Gastrocnemius medialis (tissue), 4 donors: ENCODE measurements at regions of chr10 and their contacts with region 1.

Region 1: DNA sequence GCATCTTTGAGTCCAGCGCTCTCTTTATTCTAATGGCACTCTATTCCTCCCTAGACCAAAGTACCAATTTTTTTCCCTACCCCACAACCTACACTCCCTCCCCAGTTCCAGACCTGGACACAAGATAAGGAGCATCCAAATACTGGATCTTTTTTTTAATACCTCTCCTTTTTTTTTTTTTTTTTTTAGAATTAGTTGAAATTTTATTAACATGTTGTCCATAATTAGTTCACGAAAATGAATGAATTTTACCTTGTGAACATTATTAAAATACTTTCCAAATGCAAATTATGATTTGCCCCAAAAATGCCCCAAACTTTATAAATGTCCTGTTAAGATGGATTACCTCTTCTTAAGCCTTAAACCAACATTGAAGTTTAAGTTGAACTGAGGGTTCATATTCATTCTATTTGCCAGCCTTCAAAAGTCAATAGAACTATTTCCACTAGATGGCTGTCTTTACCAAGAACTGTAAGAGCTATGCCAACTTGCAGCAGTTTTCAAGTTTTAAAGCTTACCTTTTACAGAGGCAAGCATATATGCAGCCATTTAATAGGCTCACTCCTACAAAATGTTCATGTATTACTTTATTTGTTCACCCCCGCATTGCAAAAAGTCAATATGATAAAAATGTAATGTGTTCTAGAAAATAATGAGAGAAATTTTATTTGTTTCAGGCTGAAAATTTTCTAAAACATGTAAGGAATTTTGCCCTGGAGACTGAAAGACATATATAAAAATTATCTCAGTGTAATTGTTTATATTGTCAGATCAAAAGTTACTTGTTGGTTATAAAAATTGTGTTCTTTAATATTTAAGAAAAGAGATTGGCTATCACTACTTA is 39.7 kb upstream of the TNKS2 start:
- DNase-seq: no peak
- ATAC-seq: peak; percentile 79 to 90
- H3K4me3 ChIP-seq: no peak overlapping the region
- H3K27ac ChIP-seq: no peak overlapping the region
- H3K4me1 ChIP-seq: no peaks in the 10 kb centered on the region
- H3K27me3 ChIP-seq: no peaks in the 10 kb centered on the region
- CTCF ChIP-seq: peak in 4 of 5 experiments; percentile 32 to 60 (median 57)
- POLR2A ChIP-seq: no peak

Region 2: GRCh38 chr10:91493313-91493712 is 265.2 kb before region 1 on chr10:
- in situ Hi-C with region 1: no loop called
- intact Hi-C with region 1: no loop called
- DNase-seq: no peak
- ATAC-seq: peak in 1 of 2 donors; percentile 81
- H3K4me3 ChIP-seq: no peak overlapping the region
- H3K27ac ChIP-seq: no peak overlapping the region
- H3K4me1 ChIP-seq: peaks cover 0 to 4% of the 10 kb centered on the region in 2 donors
- H3K27me3 ChIP-seq: no peaks in the 10 kb centered on the region
- CTCF ChIP-seq: peak; percentile 52 to 72 (median 56)
- POLR2A ChIP-seq: no peak

Region 3: GRCh38 chr10:91771907-91772306 is 13.4 kb after region 1 on chr10:
- in situ Hi-C with region 1: no loop called
- intact Hi-C with region 1: no loop called
- DNase-seq: no peak
- ATAC-seq: no peak
- H3K4me3 ChIP-seq: no peak overlapping the region
- H3K27ac ChIP-seq: no peak overlapping the region
- H3K4me1 ChIP-seq: no peaks in the 10 kb centered on the region
- H3K27me3 ChIP-seq: no peaks in the 10 kb centered on the region
- CTCF ChIP-seq: no peak
- POLR2A ChIP-seq: no peak

Region 4: DNA sequence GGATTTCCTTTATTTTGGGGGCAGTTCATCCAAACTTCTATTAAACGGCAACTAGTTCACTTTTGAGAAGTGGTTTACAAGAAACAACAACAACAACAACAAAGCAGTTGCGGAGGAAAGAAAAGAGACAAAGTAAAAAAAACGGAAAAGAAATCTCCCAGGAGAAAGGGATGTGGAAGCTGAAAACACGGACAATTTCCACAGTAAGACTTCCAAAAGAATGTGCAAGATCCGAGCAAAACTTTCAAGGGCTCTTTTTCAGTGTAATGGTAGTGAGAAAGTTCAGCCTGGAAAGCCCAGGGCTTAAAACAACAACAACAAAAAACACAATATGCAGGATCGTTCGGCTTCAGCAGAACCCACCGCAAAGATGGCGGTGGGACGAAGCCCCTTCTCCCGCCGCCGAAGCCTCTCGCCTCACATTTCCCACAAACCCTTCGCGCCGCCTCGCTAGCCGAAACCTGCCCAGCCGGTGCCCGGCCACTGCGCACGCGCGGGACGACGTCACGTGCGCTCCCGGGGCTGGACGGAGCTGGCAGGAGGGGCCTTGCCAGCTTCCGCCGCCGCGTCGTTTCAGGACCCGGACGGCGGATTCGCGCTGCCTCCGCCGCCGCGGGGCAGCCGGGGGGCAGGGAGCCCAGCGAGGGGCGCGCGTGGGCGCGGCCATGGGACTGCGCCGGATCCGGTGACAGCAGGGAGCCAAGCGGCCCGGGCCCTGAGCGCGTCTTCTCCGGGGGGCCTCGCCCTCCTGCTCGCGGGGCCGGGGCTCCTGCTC is 39.5 kb after region 1 on chr10 and contains the start of gene TNKS2:
- in situ Hi-C with region 1: no loop called
- intact Hi-C with region 1: loop called (anchors 2 kb)
- DNase-seq: peak; percentile 85 to 93
- ATAC-seq: peak; percentile 67 to 77
- H3K4me3 ChIP-seq: peak within 1 kb of the TSS; percentile 72 to 93 (median 84)
- H3K27ac ChIP-seq: peak within 1 kb of the TSS; percentile 95 to 97 (median 96)
- H3K4me1 ChIP-seq: peaks cover 41 to 50% of the 10 kb centered on the region in 2 donors
- H3K27me3 ChIP-seq: no peaks in the 10 kb centered on the region
- CTCF ChIP-seq: peak in 1 of 5 experiments; percentile 13
- POLR2A ChIP-seq: peak; percentile 95 to 96
- total RNA-seq, gene TNKS2: 26.2 to 40.3 (median 29.5) TPM

Region 5: DNA sequence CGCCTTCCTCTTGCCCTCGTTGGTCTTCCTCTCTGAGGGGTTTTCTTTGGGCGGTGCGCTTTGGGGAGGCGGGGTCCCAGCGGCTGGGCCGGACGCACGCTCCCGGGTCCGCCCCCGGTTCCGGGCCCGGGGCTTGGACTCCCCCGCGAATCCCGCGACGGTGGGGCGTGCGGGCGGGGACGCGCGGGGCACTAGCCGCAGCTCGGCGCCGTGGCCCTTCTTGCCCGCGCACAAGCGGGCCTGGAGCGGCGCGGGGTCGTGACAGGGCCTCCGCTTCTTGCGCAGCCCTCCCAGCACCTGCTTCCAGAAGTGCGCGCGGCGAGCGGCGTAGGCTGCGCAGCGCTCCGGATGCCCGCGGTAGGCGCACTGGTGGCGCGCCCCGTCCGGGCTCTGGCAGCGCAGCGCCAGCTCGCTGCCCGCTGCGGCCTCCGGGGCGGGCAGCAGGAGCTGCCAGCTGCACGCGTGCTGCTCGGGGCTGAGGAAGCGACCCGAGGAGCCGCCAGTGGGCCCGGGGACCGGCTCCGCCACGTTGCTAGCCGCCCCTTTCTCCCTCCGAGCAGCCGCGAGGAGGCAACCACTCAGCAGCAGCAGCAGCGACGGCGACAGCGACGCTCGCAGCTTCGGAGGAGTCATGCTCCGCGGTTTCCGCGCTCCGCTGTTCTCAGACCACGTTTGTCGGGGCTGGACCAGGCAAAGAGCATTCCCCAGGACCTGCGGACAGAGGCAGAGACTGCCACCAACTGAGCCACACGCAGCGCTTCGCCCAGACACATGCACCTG is 150.0 kb after region 1 on chr10:
- in situ Hi-C with region 1: no loop called
- intact Hi-C with region 1: loop called (anchors 2 kb)
- DNase-seq: peak; percentile 33 to 67
- ATAC-seq: peak; percentile 94
- H3K4me3 ChIP-seq: peak overlapping the region; percentile 67 to 84 (median 72)
- H3K27ac ChIP-seq: peak overlapping the region; percentile 44 to 60 (median 56)
- H3K4me1 ChIP-seq: peaks cover 7 to 16% of the 10 kb centered on the region in 2 donors
- H3K27me3 ChIP-seq: no peaks in the 10 kb centered on the region
- CTCF ChIP-seq: peak in 2 of 5 experiments; percentile 26 to 44
- POLR2A ChIP-seq: no peak

Region 6: DNA sequence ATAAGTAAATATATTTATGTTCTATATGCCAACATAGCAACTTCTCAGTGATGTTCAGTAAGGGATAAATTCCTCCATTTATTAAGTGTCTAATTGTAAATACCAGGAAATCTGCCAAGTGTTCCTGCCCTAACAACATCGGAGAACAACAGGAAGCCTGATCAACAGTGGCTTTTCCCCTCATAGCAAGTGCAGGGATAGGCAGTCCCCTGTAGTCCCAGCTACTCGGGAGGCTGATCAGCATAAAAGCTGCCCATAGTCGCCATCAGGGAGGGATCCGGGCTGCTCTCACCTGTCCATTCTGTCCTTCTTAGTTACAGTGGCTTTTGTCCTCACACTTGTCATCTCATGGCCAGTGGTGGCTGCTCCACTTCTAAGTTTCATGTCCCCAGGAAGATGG is 674.1 kb after region 1 on chr10:
- in situ Hi-C with region 1: no loop called
- intact Hi-C with region 1: loop called (anchors 5 kb)
- DNase-seq: no peak
- ATAC-seq: peak in 1 of 2 donors; percentile 30
- H3K4me3 ChIP-seq: no peak overlapping the region
- H3K27ac ChIP-seq: peak overlapping the region; percentile 35 to 61 (median 49)
- H3K4me1 ChIP-seq: peaks cover 11 to 12% of the 10 kb centered on the region in 2 donors
- H3K27me3 ChIP-seq: no peaks in the 10 kb centered on the region
- CTCF ChIP-seq: no peak
- POLR2A ChIP-seq: no peak